HCT116 (cell line): ENCODE measurements at regions of chr2 and their contacts with region 1.

Region 1: GRCh38 chr2:179422037-179422643 is 157.5 kb upstream of the SESTD1 start:
- DNase-seq: peak; percentile 58
- ATAC-seq: peak; percentile 93
- H3K4me3 ChIP-seq: no peak overlapping the region
- H3K27ac ChIP-seq: no peak overlapping the region
- H3K4me1 ChIP-seq: no peaks in the 10 kb centered on the region
- H3K27me3 ChIP-seq: no peaks in the 10 kb centered on the region
- CTCF ChIP-seq: peak; percentile 76 to 89 (median 86)
- POLR2A ChIP-seq: no peak
- RAD21 ChIP-seq: peak; percentile 87

Region 2: DNA sequence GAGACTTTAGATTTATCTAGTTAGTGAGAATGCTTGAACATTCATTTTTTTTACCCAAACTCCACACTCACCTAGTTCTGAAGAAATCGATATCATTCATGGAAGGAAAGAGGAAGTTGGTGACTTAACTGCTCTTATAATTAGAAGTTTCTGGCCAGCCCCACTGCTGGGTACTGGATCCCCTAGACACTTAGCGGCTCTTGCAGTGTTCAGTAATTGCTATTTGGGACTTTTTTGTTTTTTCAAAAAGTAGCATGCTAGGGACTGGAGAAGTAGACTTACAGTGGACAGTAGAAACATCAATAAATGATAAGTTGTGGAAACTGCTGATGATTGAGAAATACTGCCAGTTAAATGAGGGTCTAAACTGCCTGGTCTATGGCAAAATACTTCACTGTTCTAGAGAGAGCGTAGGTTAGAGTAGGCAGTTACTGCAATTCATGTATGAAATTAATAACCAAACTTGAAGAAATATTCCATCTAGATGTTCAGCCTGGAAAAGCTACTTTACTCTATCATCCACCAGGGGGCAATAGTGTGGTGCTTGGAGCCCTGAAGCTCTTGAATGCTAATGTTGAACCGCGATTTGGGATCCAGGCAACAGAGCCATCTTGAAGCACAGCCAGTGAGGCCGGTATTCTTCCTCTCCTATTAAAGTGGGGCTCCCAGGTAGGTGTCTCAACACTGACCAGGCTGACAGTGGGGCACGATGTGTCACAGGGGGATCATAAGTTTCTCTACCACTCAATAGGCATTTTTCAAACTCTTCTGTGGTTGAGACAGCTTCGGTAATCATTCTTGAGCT is 11.4 kb before region 1 on chr2:
- CTCF ChIA-PET with region 1: interaction called, 29 read pairs
- POLR2A ChIA-PET with region 1: interaction called, 3 read pairs
- RAD21 ChIA-PET with region 1: interaction called in 1 of 2 experiments, 3 read pairs
- intact Hi-C with region 1: no loop called
- DNase-seq: peak; percentile 60
- ATAC-seq: peak; percentile 96
- H3K4me3 ChIP-seq: no peak overlapping the region
- H3K27ac ChIP-seq: no peak overlapping the region
- H3K4me1 ChIP-seq: 0 out of 4 replicates have a peak, but pooled peaks cover 0 to 3% of the 10 kb centered on the region in 2 experiments
- H3K27me3 ChIP-seq: no peaks in the 10 kb centered on the region
- CTCF ChIP-seq: peak; percentile 65 to 84 (median 80); a peak in 5 of 6 replicates
- POLR2A ChIP-seq: no peak
- RAD21 ChIP-seq: peak; percentile 72

Region 3: DNA sequence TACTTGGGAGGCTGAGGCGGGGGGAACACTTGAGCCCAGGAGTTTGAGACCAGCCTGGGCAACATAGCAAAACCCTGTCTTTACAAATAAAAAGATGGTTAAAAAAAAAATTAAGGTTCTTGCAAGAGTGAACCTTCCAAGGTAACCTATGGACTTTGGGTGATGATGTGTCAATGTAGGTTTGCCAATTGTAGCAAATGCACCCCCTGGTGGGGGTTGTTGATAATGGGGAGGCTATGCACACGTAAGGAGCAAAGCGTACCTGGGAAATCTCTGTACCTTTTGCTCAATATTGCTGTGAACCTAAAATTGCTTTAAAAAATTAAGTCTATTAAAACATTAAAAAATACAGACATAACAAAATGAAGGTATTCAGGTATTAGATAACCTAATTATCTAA is 514.5 kb after region 1 on chr2:
- CTCF ChIA-PET with region 1: interaction called, 4 read pairs
- POLR2A ChIA-PET with region 1: no interaction called
- RAD21 ChIA-PET with region 1: no interaction called
- intact Hi-C with region 1: loop called (anchors 10 kb)
- DNase-seq: peak; percentile 29
- ATAC-seq: peak; percentile 90
- H3K4me3 ChIP-seq: no peak overlapping the region
- H3K27ac ChIP-seq: no peak overlapping the region
- H3K4me1 ChIP-seq: no peaks in the 10 kb centered on the region
- H3K27me3 ChIP-seq: no peaks in the 10 kb centered on the region
- CTCF ChIP-seq: peak; percentile 37 to 80 (median 70); a peak in 4 of 6 replicates
- POLR2A ChIP-seq: no peak
- RAD21 ChIP-seq: peak; percentile 60